ENCODE measurements at regions of chr3 and their contacts with region 1.

Region 1: GRCh38 chr3:40456940-40457823 is at the start of gene RPL14:
- DNase-seq: peak; percentile 80 to 97 (median 94)
- ATAC-seq: peak; percentile 73 to 78 (median 76)
- H3K4me3 ChIP-seq: peak within 1 kb of the TSS; percentile 85 to 95
- H3K4me3 Mint-ChIP-seq: peak within 1 kb of the TSS; percentile 86 to 91 (median 88)
- H3K27ac ChIP-seq: peak within 1 kb of the TSS; percentile 92
- H3K27ac Mint-ChIP-seq: peak within 1 kb of the TSS; percentile 93 to 94
- H3K4me1 ChIP-seq: peaks cover 22 to 44% of the 10 kb centered on the region in 2 experiments
- H3K4me1 Mint-ChIP-seq: peaks cover 51 to 67% (median 52%) of the 10 kb centered on the region in 3 donors
- H3K27me3 ChIP-seq: no peaks in the 10 kb centered on the region
- H3K27me3 Mint-ChIP-seq: no peaks in the 10 kb centered on the region
- total RNA-seq, gene RPL14: 2,898 to 3,980 (median 3,701) TPM

Region 2: DNA sequence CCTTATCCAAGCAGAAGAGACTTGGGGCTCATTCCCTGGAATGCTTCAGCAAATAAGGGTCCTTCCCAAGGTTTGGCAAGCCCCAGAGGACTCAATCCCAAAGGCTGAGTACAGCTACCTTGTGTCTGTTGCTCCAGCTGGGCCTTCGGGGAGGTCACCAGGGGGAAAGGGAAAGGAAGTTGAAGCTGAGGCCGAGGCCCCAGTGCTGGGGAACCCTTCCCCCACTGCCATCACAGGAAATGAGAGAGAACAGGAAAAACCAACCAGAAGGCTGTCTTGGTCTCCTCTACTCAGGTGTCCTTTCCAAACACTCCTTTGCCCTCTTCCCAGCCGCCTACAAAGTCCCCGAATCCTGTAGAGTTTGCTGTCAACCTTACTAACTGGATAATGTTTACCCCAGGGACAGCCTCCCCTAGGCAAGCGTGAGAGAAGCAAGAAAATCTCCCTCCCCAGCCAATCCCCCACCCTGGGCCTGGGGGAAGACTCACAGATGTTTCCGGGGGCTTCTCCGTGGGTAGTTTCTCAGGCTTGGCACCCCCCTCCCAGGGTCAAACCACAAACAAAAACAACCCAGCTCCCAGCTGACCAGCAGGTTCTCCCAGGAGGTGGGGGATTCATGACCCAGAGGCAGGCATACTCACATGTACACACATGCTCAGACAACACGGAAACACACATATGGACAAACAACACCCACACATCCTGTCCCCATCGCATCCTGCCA is 1309.3 kb before region 1 on chr3:
- CTCF ChIA-PET with region 1: no interaction called
- POLR2A ChIA-PET with region 1: interaction called in 1 of 2 experiments, 12 read pairs
- DNase-seq: peak in 10 of 35 experiments; percentile 18 to 57 (median 38)
- ATAC-seq: peak in 3 of 4 experiments; percentile 17 to 35 (median 21)
- H3K4me3 ChIP-seq: peak overlapping the region; percentile 33 to 34
- H3K4me3 Mint-ChIP-seq: peak overlapping the region; percentile 74 to 93 (median 89)
- H3K27ac ChIP-seq: peak overlapping the region; percentile 84
- H3K27ac Mint-ChIP-seq: peak overlapping the region; percentile 96 to 97
- H3K4me1 ChIP-seq: peaks cover 48 to 73% of the 10 kb centered on the region in 2 experiments
- H3K4me1 Mint-ChIP-seq: peaks cover 73 to 78% (median 74%) of the 10 kb centered on the region in 3 donors
- H3K27me3 ChIP-seq: no peaks in the 10 kb centered on the region
- H3K27me3 Mint-ChIP-seq: no peaks in the 10 kb centered on the region

Region 3: DNA sequence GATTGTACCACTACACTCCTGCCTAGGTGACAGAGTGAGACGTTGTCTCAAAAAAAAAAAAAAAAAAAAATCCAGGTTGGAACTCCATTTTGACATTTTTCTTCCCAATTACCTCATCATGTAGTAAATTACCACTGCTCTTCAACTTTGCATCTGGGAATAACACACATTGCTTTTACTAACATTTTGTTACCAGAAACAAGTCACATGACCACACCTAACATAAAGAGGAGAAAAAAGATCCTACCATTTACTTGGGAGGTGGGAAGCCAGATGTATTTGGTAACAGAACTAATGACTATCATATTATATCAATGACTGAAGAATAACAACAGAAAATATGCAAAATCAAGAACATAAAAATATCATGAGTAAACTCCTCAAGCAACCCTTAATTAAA is 1455.1 kb after region 1 on chr3:
- CTCF ChIA-PET with region 1: no interaction called
- POLR2A ChIA-PET with region 1: interaction called in 1 of 2 experiments, 12 read pairs
- DNase-seq: no peak
- ATAC-seq: no peak
- H3K4me3 ChIP-seq: no peak overlapping the region
- H3K4me3 Mint-ChIP-seq: no peak overlapping the region
- H3K27ac ChIP-seq: no peak overlapping the region
- H3K27ac Mint-ChIP-seq: no peak overlapping the region
- H3K4me1 ChIP-seq: no peaks in the 10 kb centered on the region
- H3K4me1 Mint-ChIP-seq: no peaks in the 10 kb centered on the region
- H3K27me3 ChIP-seq: no peaks in the 10 kb centered on the region
- H3K27me3 Mint-ChIP-seq: no peaks in the 10 kb centered on the region

Measured in T-cell (primary cell).